ENCODE measurements at regions of chr1 and their contacts with region 1.

Region 1: DNA sequence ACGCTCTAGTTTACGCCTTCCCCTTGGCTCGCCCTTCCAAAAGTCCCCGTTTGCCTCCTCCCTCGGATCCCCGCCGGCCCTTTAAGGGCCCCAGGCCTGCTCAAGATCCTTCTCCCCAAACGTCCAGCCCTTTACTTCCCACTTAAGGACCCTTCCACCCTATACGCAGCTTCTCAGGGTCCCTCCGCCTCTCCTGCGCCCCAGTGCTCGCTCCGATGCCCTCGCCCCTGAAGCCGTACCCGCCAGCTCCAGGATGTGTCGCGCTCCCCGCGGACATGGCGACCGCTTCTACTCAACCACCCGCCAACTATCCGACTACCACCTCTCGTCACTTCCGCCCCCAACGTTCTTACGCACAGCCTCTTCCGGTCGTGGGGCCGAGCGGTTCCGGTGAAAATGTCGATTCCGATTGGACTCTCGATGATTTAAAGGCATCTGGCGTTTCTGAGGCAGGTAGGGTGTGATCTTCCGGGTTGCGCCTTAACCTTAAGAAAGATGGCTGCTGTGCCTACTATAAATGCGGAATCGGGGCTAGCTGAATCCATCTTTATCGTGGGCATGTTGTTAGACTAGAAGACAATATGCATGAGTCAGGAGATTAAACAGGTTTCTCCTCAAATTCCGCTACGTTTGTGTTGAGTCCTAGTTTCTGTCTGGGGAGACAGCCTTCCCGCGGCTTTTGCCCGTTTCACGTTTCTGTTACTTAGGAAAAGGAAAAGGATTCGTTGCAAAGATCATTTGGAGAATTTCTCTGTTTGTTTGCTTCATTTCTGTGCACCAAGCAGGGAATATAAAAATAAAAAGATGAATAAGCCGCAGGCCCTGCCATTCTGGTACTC is at the start of gene KHDC4:
- DNase-seq: peak; percentile 95 to 97 (median 97)
- ATAC-seq: peak; percentile 97 to 99 (median 98)
- H3K4me3 ChIP-seq: peak within 1 kb of the TSS; percentile 63 to 96 (median 76)
- H3K27ac ChIP-seq: peak within 1 kb of the TSS; percentile 80 to 96 (median 93)
- H3K4me1 ChIP-seq: peaks cover 25 to 64% (median 46%) of the 10 kb centered on the region in 12 donors
- H3K27me3 ChIP-seq: no peaks in the 10 kb centered on the region
- CTCF ChIP-seq: peak in 3 of 12 donors; percentile 28 to 37 (median 30)
- POLR2A ChIP-seq: peak in 1 of 2 donors; percentile 83
- total RNA-seq, gene KHDC4: 16.9 to 28.0 (median 22.6) TPM

Region 2: GRCh38 chr1:155859234-155859829 is 75.0 kb before region 1 on chr1 and contains the start of gene SYT11:
- intact Hi-C with region 1: loop called in 1 of 10 experiments (anchors 5 kb)
- DNase-seq: peak; percentile 95 to 97 (median 96)
- ATAC-seq: peak; percentile 83 to 92 (median 90)
- H3K4me3 ChIP-seq: peak within 1 kb of the TSS; percentile 2 to 67 (median 56)
- H3K27ac ChIP-seq: peak within 1 kb of the TSS; percentile 78 to 97 (median 92)
- H3K4me1 ChIP-seq: peaks cover 0 to 49% (median 25%) of the 10 kb centered on the region in 12 donors
- H3K27me3 ChIP-seq: no peaks in the 10 kb centered on the region
- CTCF ChIP-seq: peak in 5 of 12 donors; percentile 10 to 46 (median 27)
- POLR2A ChIP-seq: peak in 1 of 2 donors; percentile 22
- total RNA-seq, gene SYT11: 10.7 to 26.3 (median 16.0) TPM

Region 3: GRCh38 chr1:155978325-155978972 is 44.1 kb after region 1 on chr1 and contains the start of gene ARHGEF2:
- intact Hi-C with region 1: loop called in 2 of 10 experiments (anchors 2 kb)
- DNase-seq: peak; percentile 89 to 92 (median 91)
- ATAC-seq: peak; percentile 33 to 75 (median 73)
- H3K4me3 ChIP-seq: peak within 1 kb of the TSS; percentile 65 to 97 (median 86)
- H3K27ac ChIP-seq: peak within 1 kb of the TSS; percentile 91 to 100 (median 98)
- H3K4me1 ChIP-seq: peaks cover 23 to 93% (median 66%) of the 10 kb centered on the region in 12 donors
- H3K27me3 ChIP-seq: no peaks in the 10 kb centered on the region
- CTCF ChIP-seq: peak in 8 of 12 donors; percentile 0 to 51 (median 32)
- POLR2A ChIP-seq: peak in 1 of 2 donors; percentile 43
- total RNA-seq, gene ARHGEF2: 34.7 to 98.6 (median 61.6) TPM

Region 4: GRCh38 chr1:155989242-155990004 is 55.1 kb after region 1 on chr1:
- intact Hi-C with region 1: loop called (anchors 1 to 2 kb)
- DNase-seq: peak; percentile 75 to 88 (median 78)
- ATAC-seq: peak; percentile 83 to 94 (median 92)
- H3K4me3 ChIP-seq: peak overlapping the region in 10 of 12 donors; percentile 25 to 62 (median 48)
- H3K27ac ChIP-seq: peak overlapping the region in 10 of 12 donors; percentile 12 to 90 (median 55)
- H3K4me1 ChIP-seq: peaks cover 0 to 37% (median 10%) of the 10 kb centered on the region in 12 donors
- H3K27me3 ChIP-seq: no peaks in the 10 kb centered on the region
- CTCF ChIP-seq: peak; percentile 96 to 100 (median 98)
- POLR2A ChIP-seq: no peak

Region 5: DNA sequence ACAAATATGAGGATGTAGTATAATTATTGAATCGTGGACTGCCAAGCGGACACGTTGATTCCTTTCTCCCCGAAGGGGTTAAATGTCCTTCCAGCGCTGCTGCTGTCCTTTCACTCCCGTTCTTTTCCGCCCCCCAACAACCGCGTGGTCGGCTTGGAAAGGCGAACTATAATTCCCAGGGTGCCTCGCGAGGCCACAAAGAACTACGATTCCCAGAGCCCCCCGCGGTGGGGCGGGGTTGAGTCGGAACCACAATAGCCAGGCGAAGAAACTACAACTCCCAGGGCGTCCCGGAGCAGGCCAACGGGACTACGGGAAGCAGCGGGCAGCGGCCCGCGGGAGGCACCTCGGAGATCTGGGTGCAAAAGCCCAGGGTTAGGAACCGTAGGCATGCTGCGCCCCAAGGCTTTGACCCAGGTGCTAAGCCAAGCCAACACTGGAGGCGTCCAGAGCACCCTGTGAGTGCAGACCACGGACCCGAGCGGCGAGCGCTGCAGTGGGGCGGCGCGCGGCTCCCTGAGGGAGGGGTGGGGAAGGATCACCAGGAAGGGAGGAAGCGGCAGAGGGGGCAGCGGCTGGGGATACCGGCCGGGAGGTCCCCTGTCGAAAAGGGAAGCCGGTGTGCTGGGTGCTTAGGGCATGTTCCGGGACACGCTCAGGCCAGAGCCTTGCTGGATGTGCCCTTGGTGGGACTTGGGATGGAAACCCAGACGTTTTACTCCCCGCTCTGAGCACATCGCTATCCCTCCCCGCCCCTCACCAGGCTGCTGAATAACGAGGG is 120.4 kb after region 1 on chr1 and contains the start of gene LAMTOR2:
- intact Hi-C with region 1: loop called in 2 of 10 experiments (anchors 10 kb)
- DNase-seq: peak; percentile 98 to 99 (median 98)
- ATAC-seq: peak; percentile 90 to 96 (median 92)
- H3K4me3 ChIP-seq: peak within 1 kb of the TSS; percentile 64 to 98 (median 87)
- H3K27ac ChIP-seq: peak within 1 kb of the TSS; percentile 83 to 99 (median 96)
- H3K4me1 ChIP-seq: peaks cover 0 to 50% (median 24%) of the 10 kb centered on the region in 12 donors
- H3K27me3 ChIP-seq: no peaks in the 10 kb centered on the region
- CTCF ChIP-seq: peak in 1 of 12 donors; percentile 10
- POLR2A ChIP-seq: peak in 1 of 2 donors; percentile 78
- total RNA-seq, gene LAMTOR2: 51.5 to 83.2 (median 61.4) TPM

Region 6: DNA sequence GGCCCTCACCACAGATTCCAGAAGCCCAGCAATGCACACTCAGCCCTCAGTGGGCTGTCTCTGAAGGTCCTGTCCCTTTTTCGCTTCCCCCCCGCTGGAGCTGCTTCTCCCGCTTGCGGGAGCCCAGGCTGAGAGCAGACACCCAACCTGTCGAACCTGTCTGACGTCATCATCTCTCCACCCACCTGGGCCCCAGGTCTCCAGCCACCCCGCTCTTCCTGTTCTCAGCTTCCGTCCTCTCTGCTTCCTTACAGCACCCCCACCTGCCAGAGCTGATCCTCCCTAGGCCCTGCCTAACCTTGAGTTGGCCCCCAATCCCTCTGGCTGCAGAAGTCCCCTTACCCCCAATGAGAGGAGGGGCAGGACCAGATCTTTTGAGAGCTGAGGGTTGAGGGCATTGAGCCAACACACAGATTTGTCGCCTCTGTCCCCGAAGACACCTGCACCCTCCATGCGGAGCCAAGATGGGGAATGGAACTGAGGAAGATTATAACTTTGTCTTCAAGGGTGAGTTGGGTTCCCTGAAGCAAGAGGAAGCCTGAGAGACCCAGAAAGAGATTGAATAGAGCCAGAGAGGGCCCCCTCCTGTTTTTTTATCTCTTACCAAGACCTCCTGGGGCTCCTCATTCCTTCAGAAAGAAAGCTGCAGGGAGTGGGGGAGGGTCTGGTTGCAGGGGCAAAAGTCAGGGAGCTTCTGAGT is 126.8 kb after region 1 on chr1 and contains the start of gene RAB25:
- intact Hi-C with region 1: loop called in 3 of 10 experiments (anchors 10 kb)
- DNase-seq: peak in 2 of 5 donors; percentile 13 to 22
- ATAC-seq: peak in 1 of 4 donors; percentile 14
- H3K4me3 ChIP-seq: no peak within 1 kb of the TSS
- H3K27ac ChIP-seq: no peak within 1 kb of the TSS
- H3K4me1 ChIP-seq: peaks cover 0 to 7% (median under 1%) of the 10 kb centered on the region in 12 donors
- H3K27me3 ChIP-seq: no peaks in the 10 kb centered on the region
- CTCF ChIP-seq: no peak
- POLR2A ChIP-seq: no peak
- total RNA-seq, gene RAB25: not detected

Region 7: GRCh38 chr1:156540791-156541383 is 606.6 kb after region 1 on chr1:
- intact Hi-C with region 1: no loop called
- DNase-seq: no peak
- ATAC-seq: peak in 3 of 4 donors; percentile 48 to 59 (median 54)
- H3K4me3 ChIP-seq: no peak overlapping the region
- H3K27ac ChIP-seq: no peak overlapping the region
- H3K4me1 ChIP-seq: peaks cover 0 to 7% (median 0%) of the 10 kb centered on the region in 12 donors
- H3K27me3 ChIP-seq: no peaks in the 10 kb centered on the region
- CTCF ChIP-seq: no peak
- POLR2A ChIP-seq: no peak